ENCODE measurements at regions of chr3 and their contacts with region 1.

Region 1: GRCh38 chr3:10945683-10946287 is 46.8 kb upstream of the SLC6A1 start:
- DNase-seq: peak; percentile 93
- ATAC-seq: peak; percentile 98
- H3K4me3 Mint-ChIP-seq: no peak overlapping the region
- H3K27ac Mint-ChIP-seq: no peak overlapping the region
- H3K4me1 Mint-ChIP-seq: peaks cover 2% of the 10 kb centered on the region; the same call in 1 of the 2 replicates
- H3K27me3 Mint-ChIP-seq: no peaks in the 10 kb centered on the region; the same call in none of the 2 replicates
- CTCF ChIP-seq: peak; percentile 80

Region 2: DNA sequence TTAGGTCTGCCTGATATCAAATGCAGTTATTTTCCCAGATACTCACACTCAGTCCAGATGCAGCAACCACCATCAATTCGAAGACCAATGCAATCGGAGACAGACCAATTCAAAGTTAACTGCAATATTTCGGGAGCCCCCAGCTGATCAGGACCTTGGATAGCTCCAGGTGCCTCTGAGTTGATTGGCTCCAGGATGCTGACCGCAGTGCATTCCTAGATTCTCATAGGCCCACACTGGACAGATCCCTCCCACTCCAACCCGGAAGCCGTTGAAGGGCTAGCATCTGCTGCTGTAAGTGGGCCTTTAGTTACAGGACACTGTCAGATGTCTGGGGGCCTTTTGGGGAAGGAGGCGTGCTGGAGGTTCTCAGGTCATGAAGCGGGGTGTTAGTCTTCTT is 350.9 kb before region 1 on chr3:
- CTCF ChIA-PET with region 1: no interaction called
- POLR2A ChIA-PET with region 1: no interaction called
- DNase-seq: peak; percentile 93
- ATAC-seq: peak; percentile 100
- H3K4me3 Mint-ChIP-seq: no peak overlapping the region
- H3K27ac Mint-ChIP-seq: no peak overlapping the region
- H3K4me1 Mint-ChIP-seq: 0 out of 2 replicates have a peak, but pooled peaks cover 3% of the 10 kb centered on the region
- H3K27me3 Mint-ChIP-seq: peaks cover 6% of the 10 kb centered on the region
- CTCF ChIP-seq: no peak

Region 3: GRCh38 chr3:10758304-10759061 is 187.3 kb before region 1 on chr3:
- CTCF ChIA-PET with region 1: interaction called, 17 read pairs
- POLR2A ChIA-PET with region 1: no interaction called
- DNase-seq: peak; percentile 69
- ATAC-seq: peak; percentile 92
- H3K4me3 Mint-ChIP-seq: no peak overlapping the region
- H3K27ac Mint-ChIP-seq: no peak overlapping the region
- H3K4me1 Mint-ChIP-seq: peaks cover 8% of the 10 kb centered on the region
- H3K27me3 Mint-ChIP-seq: peaks cover 25% of the 10 kb centered on the region
- CTCF ChIP-seq: peak; percentile 58

Region 4: DNA sequence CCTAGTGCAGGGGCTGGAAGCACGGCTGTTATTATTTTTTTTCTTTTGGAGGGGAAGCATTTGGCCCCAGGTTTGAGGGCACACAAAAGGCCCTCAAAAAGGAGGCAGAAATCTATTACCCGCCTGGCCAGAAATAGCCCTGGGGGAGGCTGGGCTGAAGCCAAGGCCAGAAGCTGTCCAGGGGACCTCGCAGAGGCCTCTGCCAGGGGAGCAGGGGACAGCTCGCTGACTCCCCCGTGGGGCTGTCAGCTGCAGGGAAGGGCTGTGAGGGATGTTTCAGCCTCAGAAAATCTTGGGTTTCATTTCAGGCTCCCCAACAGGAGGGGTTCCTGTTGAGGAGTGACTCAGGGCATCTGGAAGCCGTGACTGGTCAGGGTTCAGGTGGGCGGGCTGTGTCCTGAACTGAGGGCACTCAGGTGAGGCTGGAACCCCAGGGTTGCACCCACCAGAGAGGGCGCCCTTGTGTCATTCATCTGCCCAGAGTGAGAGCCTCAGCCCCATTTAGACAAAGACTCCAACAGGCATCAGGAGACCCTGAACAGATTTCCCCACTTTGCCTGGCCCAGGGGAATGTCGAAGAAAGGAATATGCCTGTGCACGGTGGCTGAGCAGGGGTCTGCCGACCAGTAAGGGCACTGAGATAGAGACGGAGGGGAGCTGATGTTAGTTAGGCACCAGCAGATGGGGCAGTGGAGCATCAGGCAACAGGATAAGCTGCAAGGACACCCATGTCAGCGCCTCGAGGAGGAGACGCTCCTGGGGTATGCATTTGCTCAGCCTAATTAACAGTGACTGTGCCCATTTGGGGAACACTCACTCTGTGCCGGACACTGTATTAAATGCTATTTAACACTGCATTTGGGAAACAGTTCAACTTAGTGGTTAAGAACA is 173.3 kb before region 1 on chr3:
- CTCF ChIA-PET with region 1: interaction called, 16 read pairs
- POLR2A ChIA-PET with region 1: no interaction called
- DNase-seq: peak; percentile 81
- ATAC-seq: peak; percentile 98
- H3K4me3 Mint-ChIP-seq: no peak overlapping the region
- H3K27ac Mint-ChIP-seq: no peak overlapping the region
- H3K4me1 Mint-ChIP-seq: no peaks in the 10 kb centered on the region
- H3K27me3 Mint-ChIP-seq: peaks cover 22% of the 10 kb centered on the region
- CTCF ChIP-seq: peak; percentile 38

Region 5: GRCh38 chr3:10955711-10956453 is 10.1 kb after region 1 on chr3:
- CTCF ChIA-PET with region 1: interaction called, 13 read pairs
- POLR2A ChIA-PET with region 1: no interaction called
- DNase-seq: no peak
- ATAC-seq: no peak
- H3K4me3 Mint-ChIP-seq: no peak overlapping the region
- H3K27ac Mint-ChIP-seq: no peak overlapping the region
- H3K4me1 Mint-ChIP-seq: no peaks in the 10 kb centered on the region
- H3K27me3 Mint-ChIP-seq: no peaks in the 10 kb centered on the region
- CTCF ChIP-seq: no peak

Region 6: GRCh38 chr3:10983219-10983916 is 37.6 kb after region 1 on chr3:
- CTCF ChIA-PET with region 1: interaction called, 15 read pairs
- POLR2A ChIA-PET with region 1: no interaction called
- DNase-seq: peak; percentile 42
- ATAC-seq: peak; percentile 84
- H3K4me3 Mint-ChIP-seq: no peak overlapping the region
- H3K27ac Mint-ChIP-seq: no peak overlapping the region
- H3K4me1 Mint-ChIP-seq: peaks cover 29% of the 10 kb centered on the region
- H3K27me3 Mint-ChIP-seq: peaks cover 26% of the 10 kb centered on the region
- CTCF ChIP-seq: peak; percentile 71

Region 7: GRCh38 chr3:11006986-11007933 is 61.5 kb after region 1 on chr3:
- CTCF ChIA-PET with region 1: interaction called, 21 read pairs
- POLR2A ChIA-PET with region 1: no interaction called
- DNase-seq: peak; percentile 64
- ATAC-seq: peak; percentile 87
- H3K4me3 Mint-ChIP-seq: no peak overlapping the region
- H3K27ac Mint-ChIP-seq: no peak overlapping the region
- H3K4me1 Mint-ChIP-seq: peaks cover 18% of the 10 kb centered on the region
- H3K27me3 Mint-ChIP-seq: peaks cover 3% of the 10 kb centered on the region
- CTCF ChIP-seq: peak; percentile 10; the same call in 1 of the 2 replicates

Region 8: DNA sequence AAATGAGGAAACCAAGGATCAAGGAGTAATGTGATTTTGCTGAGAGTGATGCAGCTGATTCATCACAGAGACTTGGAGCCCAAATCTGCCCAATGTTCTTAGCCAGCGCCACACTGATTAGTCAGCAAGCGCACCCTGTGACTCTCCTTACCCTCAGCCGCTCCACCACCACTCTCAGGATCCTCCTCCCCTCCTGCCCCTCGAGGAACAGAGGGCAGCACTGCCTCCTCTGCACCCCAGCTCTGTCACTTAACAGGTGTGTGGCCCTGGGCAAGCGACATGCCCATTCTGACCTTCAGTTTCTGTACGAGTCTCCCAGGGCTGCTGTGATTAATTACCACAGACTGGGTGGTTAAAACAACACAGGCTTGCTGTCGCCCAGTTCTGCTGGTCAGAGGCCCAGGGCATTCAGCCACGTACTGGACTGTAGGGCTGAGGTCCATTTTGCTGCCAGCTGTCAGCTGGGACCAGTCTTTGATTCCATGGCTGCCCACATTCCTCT is 172.4 kb after region 1 on chr3:
- CTCF ChIA-PET with region 1: no interaction called
- POLR2A ChIA-PET with region 1: no interaction called
- DNase-seq: no peak
- ATAC-seq: no peak
- H3K4me3 Mint-ChIP-seq: no peak overlapping the region
- H3K27ac Mint-ChIP-seq: no peak overlapping the region
- H3K4me1 Mint-ChIP-seq: peaks cover 9% of the 10 kb centered on the region
- H3K27me3 Mint-ChIP-seq: peaks cover 5% of the 10 kb centered on the region; the same call in 1 of the 2 replicates
- CTCF ChIP-seq: no peak